ENCODE measurements at regions of chr3 and their contacts with region 1.

Region 1: GRCh38 chr3:88509582-88509981 is 359.8 kb downstream of the C3orf38 start:
- DNase-seq: no peak
- ATAC-seq: no peak
- H3K4me3 ChIP-seq: no peak overlapping the region
- H3K4me3 Mint-ChIP-seq: no peak overlapping the region
- H3K27ac ChIP-seq: no peak overlapping the region
- H3K27ac Mint-ChIP-seq: no peak overlapping the region
- H3K4me1 ChIP-seq: no peaks in the 10 kb centered on the region
- H3K4me1 Mint-ChIP-seq: no peaks in the 10 kb centered on the region
- H3K27me3 ChIP-seq: no peaks in the 10 kb centered on the region
- H3K27me3 Mint-ChIP-seq: no peaks in the 10 kb centered on the region
- CTCF ChIP-seq: no peak

Region 2: GRCh38 chr3:89087851-89088250 is 578.3 kb after region 1 on chr3:
- CTCF ChIA-PET with region 1: no interaction called
- POLR2A ChIA-PET with region 1: no interaction called
- intact Hi-C with region 1: loop called in 1 of 2 experiments (anchors 10 kb)
- DNase-seq: no peak
- ATAC-seq: no peak
- H3K4me3 ChIP-seq: no peak overlapping the region
- H3K4me3 Mint-ChIP-seq: no peak overlapping the region
- H3K27ac ChIP-seq: no peak overlapping the region
- H3K27ac Mint-ChIP-seq: no peak overlapping the region
- H3K4me1 ChIP-seq: no peaks in the 10 kb centered on the region
- H3K4me1 Mint-ChIP-seq: no peaks in the 10 kb centered on the region
- H3K27me3 ChIP-seq: no peaks in the 10 kb centered on the region
- H3K27me3 Mint-ChIP-seq: no peaks in the 10 kb centered on the region
- CTCF ChIP-seq: no peak